ENCODE measurements at regions of chr10 and their contacts with region 1.

Region 1: DNA sequence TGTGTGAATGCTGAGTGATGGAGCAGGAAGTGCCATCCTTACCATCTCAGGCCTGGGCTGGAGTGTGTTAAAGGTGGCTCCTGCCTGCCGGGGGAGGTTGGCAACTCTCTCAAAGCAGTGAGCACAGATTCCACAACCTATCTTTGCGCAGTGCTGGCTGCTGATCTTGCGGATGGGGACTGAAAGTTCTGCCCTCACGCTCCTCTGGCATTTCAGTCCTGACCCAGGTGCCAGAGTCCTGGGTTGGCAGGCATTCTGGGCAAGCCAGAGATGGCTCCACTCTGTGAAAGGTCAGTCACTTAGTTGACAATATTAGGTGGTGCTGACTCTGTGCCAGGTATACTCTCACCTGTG is 315.5 kb downstream of the RPS24 start:
- DNase-seq: no peak
- H3K4me3 ChIP-seq: no peak overlapping the region
- H3K27ac ChIP-seq: no peak overlapping the region
- H3K4me1 ChIP-seq: no peaks in the 10 kb centered on the region
- H3K27me3 ChIP-seq: no peaks in the 10 kb centered on the region
- CTCF ChIP-seq: no peak
- EP300 ChIP-seq: no peak
- POLR2A ChIP-seq: no peak
- RAD21 ChIP-seq: no peak

Region 2: GRCh38 chr10:78302989-78303854 is 45.9 kb before region 1 on chr10:
- CTCF ChIA-PET with region 1: interaction called, 11 read pairs
- POLR2A ChIA-PET with region 1: no interaction called
- DNase-seq: peak; percentile 77 to 97
- H3K4me3 ChIP-seq: peak overlapping the region; percentile 46 to 65 (median 53)
- H3K27ac ChIP-seq: peak overlapping the region; percentile 37; the same call in 1 of the 2 replicates
- H3K4me1 ChIP-seq: peaks cover 7 to 10% (median 7%) of the 10 kb centered on the region in 4 experiments
- H3K27me3 ChIP-seq: 0 out of 7 replicates have a peak, but pooled peaks cover 0 to 3% (median 0%) of the 10 kb centered on the region in 4 experiments
- CTCF ChIP-seq: peak; percentile 71 to 94 (median 79)
- EP300 ChIP-seq: no peak
- POLR2A ChIP-seq: peak; percentile 56 to 88
- RAD21 ChIP-seq: peak; percentile 65 to 74